Activated CD4-positive, alpha-beta T cell treated with anti-CD3 and anti-CD28 coated beads for 36 hours (primary cell): ENCODE measurements at regions of chr1 and their contacts with region 1.

Region 1: GRCh38 chr1:110674337-110675059 is at the start of gene KCNA3:
- DNase-seq: peak; percentile 74
- ATAC-seq: peak; percentile 9
- H3K4me3 Mint-ChIP-seq: peak within 1 kb of the TSS; percentile 99
- H3K27ac Mint-ChIP-seq: peak within 1 kb of the TSS; percentile 99
- H3K4me1 Mint-ChIP-seq: peaks cover 34% of the 10 kb centered on the region
- H3K27me3 Mint-ChIP-seq: no peaks in the 10 kb centered on the region
- total RNA-seq, gene KCNA3: 20.0 to 20.5 TPM

Region 2: GRCh38 chr1:110209715-110210603 is 464.5 kb before region 1 on chr1 and contains the start of gene KCNC4:
- CTCF ChIA-PET with region 1: no interaction called
- POLR2A ChIA-PET with region 1: no interaction called
- intact Hi-C with region 1: loop called in 1 of 2 experiments (anchors 10 kb)
- DNase-seq: peak; percentile 95
- ATAC-seq: peak; percentile 88
- H3K4me3 Mint-ChIP-seq: peak within 1 kb of the TSS; percentile 82
- H3K27ac Mint-ChIP-seq: peak within 1 kb of the TSS; percentile 81
- H3K4me1 Mint-ChIP-seq: peaks cover 49% of the 10 kb centered on the region
- H3K27me3 Mint-ChIP-seq: no peaks in the 10 kb centered on the region
- total RNA-seq, gene KCNC4: 13.9 to 14.3 TPM

Region 3: GRCh38 chr1:110630839-110631663 is 43.4 kb before region 1 on chr1:
- CTCF ChIA-PET with region 1: interaction called, 6 read pairs
- POLR2A ChIA-PET with region 1: interaction called, 19 read pairs
- intact Hi-C with region 1: loop called (anchors 1 kb)
- DNase-seq: peak; percentile 93
- ATAC-seq: peak; percentile 76
- H3K4me3 Mint-ChIP-seq: no peak overlapping the region
- H3K27ac Mint-ChIP-seq: no peak overlapping the region
- H3K4me1 Mint-ChIP-seq: peaks cover 55% of the 10 kb centered on the region
- H3K27me3 Mint-ChIP-seq: no peaks in the 10 kb centered on the region

Region 4: GRCh38 chr1:110872745-110873720 is 198.5 kb after region 1 on chr1 and contains the start of gene CD53:
- CTCF ChIA-PET with region 1: no interaction called
- POLR2A ChIA-PET with region 1: interaction called, 3 read pairs
- intact Hi-C with region 1: loop called (anchors 1 kb)
- DNase-seq: peak; percentile 62
- ATAC-seq: peak; percentile 33
- H3K4me3 Mint-ChIP-seq: peak within 1 kb of the TSS; percentile 85
- H3K27ac Mint-ChIP-seq: peak within 1 kb of the TSS; percentile 95
- H3K4me1 Mint-ChIP-seq: peaks cover 39% of the 10 kb centered on the region
- H3K27me3 Mint-ChIP-seq: no peaks in the 10 kb centered on the region
- total RNA-seq, gene CD53: 238 to 244 TPM

Region 5: DNA sequence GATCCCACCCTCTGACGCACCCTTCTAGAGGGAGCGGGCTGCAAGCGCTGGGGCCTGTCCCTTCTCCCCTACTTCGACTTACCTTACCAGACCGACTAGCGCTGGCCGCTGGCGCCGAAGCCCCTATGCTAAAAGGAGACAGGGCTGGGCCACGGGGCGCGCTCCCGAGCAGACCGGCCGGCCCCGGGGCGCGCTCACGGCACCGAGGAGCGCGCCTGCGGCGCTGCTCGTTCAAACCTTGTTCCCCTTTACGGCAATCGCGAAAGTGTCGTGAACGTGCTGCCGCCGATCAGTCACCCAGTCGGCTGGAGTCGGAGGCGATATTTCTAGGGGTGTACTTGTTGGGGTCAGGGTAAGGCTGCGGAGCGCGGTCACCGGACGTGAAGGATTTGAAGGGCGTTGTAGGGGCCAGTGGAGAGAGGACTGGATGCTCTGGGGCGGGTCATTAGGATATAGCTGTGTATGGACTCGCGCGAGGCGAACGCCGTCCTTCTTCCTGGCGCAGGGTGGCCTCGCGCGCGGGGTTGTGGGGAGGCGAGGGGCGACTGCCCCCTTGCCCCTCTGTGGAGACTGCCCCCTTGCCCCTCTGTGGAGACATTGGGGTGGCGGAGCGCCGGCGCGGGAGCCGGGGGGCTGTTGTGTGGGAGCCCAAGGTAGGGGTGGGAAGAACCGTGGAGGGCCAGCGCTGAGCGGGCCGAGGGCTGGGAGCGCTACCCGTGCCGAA is 465.6 kb after region 1 on chr1 and contains the starts of genes CEPT1 and DRAM2:
- CTCF ChIA-PET with region 1: interaction called, 3 read pairs
- POLR2A ChIA-PET with region 1: no interaction called
- intact Hi-C with region 1: loop called in 1 of 2 experiments (anchors 5 kb)
- DNase-seq: peak; percentile 98
- ATAC-seq: peak; percentile 78
- H3K4me3 Mint-ChIP-seq: peak within 1 kb of the TSS; percentile 95
- H3K27ac Mint-ChIP-seq: peak within 1 kb of the TSS; percentile 99
- H3K4me1 Mint-ChIP-seq: peaks cover 53% of the 10 kb centered on the region
- H3K27me3 Mint-ChIP-seq: no peaks in the 10 kb centered on the region
- total RNA-seq, gene CEPT1: 34.7 to 49.1 TPM
- total RNA-seq, gene DRAM2: 30.4 to 34.4 TPM

Region 6: GRCh38 chr1:111619635-111620440 is 945.3 kb after region 1 on chr1 and contains the start of gene RAP1A:
- CTCF ChIA-PET with region 1: no interaction called
- POLR2A ChIA-PET with region 1: no interaction called
- intact Hi-C with region 1: loop called in 1 of 2 experiments (anchors 10 kb)
- DNase-seq: peak; percentile 98
- ATAC-seq: peak; percentile 71
- H3K4me3 Mint-ChIP-seq: peak within 1 kb of the TSS; percentile 96
- H3K27ac Mint-ChIP-seq: peak within 1 kb of the TSS; percentile 97
- H3K4me1 Mint-ChIP-seq: peaks cover 72% of the 10 kb centered on the region
- H3K27me3 Mint-ChIP-seq: no peaks in the 10 kb centered on the region
- total RNA-seq, gene RAP1A: 182 to 214 TPM